Prostate gland (tissue), 2 donors: ENCODE measurements at regions of chr15 and their contacts with region 1.

Region 1: GRCh38 chr15:82999905-83000671 is 11.4 kb downstream of the C15orf40 start:
- DNase-seq: peak; percentile 45
- H3K4me3 ChIP-seq: peak overlapping the region; percentile 1 to 33
- H3K27ac ChIP-seq: peak overlapping the region; percentile 72 to 81
- H3K4me1 ChIP-seq: peaks cover 7% of the 10 kb centered on the region
- H3K27me3 ChIP-seq: no peaks in the 10 kb centered on the region
- CTCF ChIP-seq: peak in 3 of 4 experiments; percentile 63 to 79 (median 78)
- POLR2A ChIP-seq: no peak

Region 2: DNA sequence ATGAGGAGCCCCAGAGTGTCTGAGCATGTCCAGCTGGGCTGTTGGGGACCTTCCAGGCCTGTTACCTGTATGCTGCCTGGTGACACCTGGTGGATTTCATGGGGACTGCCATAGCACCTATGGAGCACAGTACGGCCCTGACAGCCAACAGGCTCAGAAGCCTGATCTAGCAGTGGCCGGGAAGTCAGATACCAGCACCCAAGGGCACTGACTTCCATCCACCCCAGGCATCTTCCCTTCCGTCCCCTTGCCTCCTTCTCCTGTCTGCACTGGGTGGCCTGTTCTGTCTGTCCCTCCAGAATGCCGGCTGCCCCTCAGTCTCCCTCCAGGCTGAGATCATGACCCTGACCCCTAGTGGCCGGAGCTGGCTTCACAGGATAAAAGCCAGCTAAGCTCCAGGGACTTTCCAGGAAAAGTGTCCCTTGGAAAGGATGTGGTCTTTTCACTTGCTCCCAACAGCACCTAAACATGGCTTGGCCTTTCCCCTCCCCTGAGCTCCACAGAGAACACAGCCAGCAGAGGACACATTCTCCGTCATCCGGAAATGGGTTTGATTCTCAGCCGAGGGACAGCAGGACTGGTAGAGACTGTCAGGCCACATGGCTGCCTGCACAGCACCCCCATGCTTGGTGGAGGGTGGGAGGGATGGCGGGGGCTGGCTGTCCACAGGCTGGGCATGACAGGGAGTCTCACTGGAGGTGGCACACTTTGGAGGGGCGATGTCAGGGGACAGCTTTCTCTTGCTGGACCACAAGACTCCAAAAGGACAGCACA is 469.3 kb before region 1 on chr15:
- intact Hi-C with region 1: loop called (anchors 10 kb)
- DNase-seq: peak; percentile 84
- H3K4me3 ChIP-seq: no peak overlapping the region
- H3K27ac ChIP-seq: no peak overlapping the region
- H3K4me1 ChIP-seq: no peaks in the 10 kb centered on the region
- H3K27me3 ChIP-seq: no peaks in the 10 kb centered on the region
- CTCF ChIP-seq: peak; percentile 78 to 95 (median 82)
- POLR2A ChIP-seq: no peak

Region 3: GRCh38 chr15:82849556-82850512 is 150.3 kb before region 1 on chr15:
- intact Hi-C with region 1: loop called (anchors 2 kb)
- DNase-seq: peak; percentile 93
- H3K4me3 ChIP-seq: no peak overlapping the region
- H3K27ac ChIP-seq: peak overlapping the region; percentile 79 to 88
- H3K4me1 ChIP-seq: peaks cover 14% of the 10 kb centered on the region
- H3K27me3 ChIP-seq: no peaks in the 10 kb centered on the region
- CTCF ChIP-seq: peak; percentile 58 to 94 (median 88)
- POLR2A ChIP-seq: no peak